HCT116 (cell line): ENCODE measurements at regions of chr17 and their contacts with region 1.

Region 1: DNA sequence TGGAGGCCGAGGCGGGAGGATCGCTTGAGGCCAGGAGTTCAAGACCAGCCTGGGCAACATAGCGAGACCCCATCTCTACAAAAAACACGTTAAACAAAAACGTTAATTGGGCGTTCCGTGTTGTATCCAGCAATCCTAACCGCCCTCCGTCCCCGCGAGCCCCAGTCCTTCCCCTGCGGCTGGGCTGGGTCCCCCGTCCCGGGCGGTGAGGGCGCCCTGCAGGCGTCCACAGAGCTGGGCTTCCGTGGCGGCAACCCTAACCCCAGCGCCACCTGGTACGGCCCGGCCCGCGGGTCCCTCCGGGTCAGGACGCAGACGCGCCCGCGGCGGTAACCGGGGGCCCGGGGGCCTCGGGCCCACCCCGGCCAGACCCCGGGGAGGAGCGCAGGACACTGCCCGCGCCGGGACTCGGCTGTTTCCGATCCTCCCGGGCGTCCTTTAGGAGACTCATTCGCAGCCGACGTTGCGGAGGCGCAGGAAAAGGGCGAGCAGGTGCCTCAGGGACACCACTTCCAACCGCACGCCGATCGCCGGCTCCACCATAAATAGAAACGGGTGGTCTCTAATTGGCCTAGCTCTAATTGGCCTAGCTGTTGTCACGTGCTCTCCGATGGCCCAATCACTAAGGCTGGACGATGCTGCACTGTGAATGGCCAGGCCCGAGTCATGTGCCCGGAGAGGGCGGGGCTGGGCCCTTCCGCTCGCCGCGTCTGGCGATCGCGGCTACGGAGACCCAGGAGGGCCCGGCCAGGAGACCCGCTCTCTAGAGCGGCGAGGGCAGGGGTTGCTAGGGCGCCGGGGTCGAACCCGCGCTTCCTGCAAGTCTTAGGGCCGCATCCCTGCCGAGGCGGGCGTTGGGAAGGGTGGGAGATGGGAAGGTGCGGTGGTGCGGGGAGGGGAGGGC is 19.0 kb upstream of the CSNK1D start:
- DNase-seq: peak; percentile 99
- ATAC-seq: peak; percentile 92
- H3K4me3 ChIP-seq: peak overlapping the region; percentile 78 to 87
- H3K27ac ChIP-seq: peak overlapping the region; percentile 97
- H3K4me1 ChIP-seq: peaks cover 38 to 64% of the 10 kb centered on the region in 2 experiments
- H3K27me3 ChIP-seq: no peaks in the 10 kb centered on the region
- CTCF ChIP-seq: no peak
- POLR2A ChIP-seq: peak; percentile 96
- RAD21 ChIP-seq: no peak

Region 2: GRCh38 chr17:82273327-82274133 is 19.0 kb before region 1 on chr17 and contains the start of gene CSNK1D:
- CTCF ChIA-PET with region 1: no interaction called
- POLR2A ChIA-PET with region 1: interaction called, 11 read pairs
- RAD21 ChIA-PET with region 1: no interaction called
- intact Hi-C with region 1: no loop called
- DNase-seq: peak; percentile 72
- ATAC-seq: peak; percentile 90
- H3K4me3 ChIP-seq: peak within 1 kb of the TSS; percentile 77
- H3K27ac ChIP-seq: peak within 1 kb of the TSS; percentile 95
- H3K4me1 ChIP-seq: peaks cover 14 to 55% of the 10 kb centered on the region in 2 experiments
- H3K27me3 ChIP-seq: no peaks in the 10 kb centered on the region
- CTCF ChIP-seq: no peak
- POLR2A ChIP-seq: peak; percentile 71
- RAD21 ChIP-seq: no peak
- total RNA-seq, gene CSNK1D: 176 TPM

Region 3: GRCh38 chr17:82380860-82381702 is 88.6 kb after region 1 on chr17:
- CTCF ChIA-PET with region 1: no interaction called
- POLR2A ChIA-PET with region 1: no interaction called
- RAD21 ChIA-PET with region 1: no interaction called
- intact Hi-C with region 1: no loop called
- DNase-seq: no peak
- ATAC-seq: no peak
- H3K4me3 ChIP-seq: no peak overlapping the region
- H3K27ac ChIP-seq: no peak overlapping the region
- H3K4me1 ChIP-seq: peaks cover 15 to 20% of the 10 kb centered on the region in 2 experiments
- H3K27me3 ChIP-seq: no peaks in the 10 kb centered on the region
- CTCF ChIP-seq: no peak
- POLR2A ChIP-seq: no peak
- RAD21 ChIP-seq: no peak